ENCODE measurements at regions of chr17 and their contacts with region 1.

Region 1: DNA sequence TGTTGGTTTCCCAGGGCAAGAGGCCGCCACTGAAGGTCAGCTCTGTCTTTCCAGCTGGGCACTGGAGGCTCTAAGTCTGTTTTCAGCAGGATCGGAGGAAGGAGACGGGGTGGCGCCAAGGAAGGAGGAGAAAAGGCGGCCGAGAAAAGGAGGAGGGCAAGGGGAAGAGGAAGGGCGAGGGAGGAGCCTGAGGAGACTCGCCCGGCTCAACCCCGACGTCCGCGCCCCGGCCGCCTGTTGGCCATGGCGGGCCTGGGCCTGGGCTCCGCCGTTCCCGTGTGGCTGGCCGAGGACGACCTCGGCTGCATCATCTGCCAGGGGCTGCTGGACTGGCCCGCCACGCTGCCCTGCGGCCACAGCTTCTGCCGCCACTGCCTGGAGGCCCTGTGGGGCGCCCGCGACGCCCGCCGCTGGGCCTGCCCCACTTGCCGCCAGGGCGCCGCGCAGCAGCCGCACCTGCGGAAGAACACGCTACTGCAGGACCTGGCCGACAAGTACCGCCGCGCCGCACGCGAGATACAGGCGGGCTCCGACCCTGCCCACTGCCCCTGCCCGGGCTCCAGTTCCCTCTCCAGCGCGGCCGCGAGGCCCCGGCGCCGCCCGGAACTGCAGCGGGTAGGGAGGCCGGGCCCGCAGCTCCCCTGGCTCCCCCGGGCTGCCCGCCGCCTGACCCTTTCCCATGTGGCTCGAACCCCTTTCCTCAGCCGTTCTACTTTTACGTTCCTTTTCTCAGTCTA is at the start of gene RNF135:
- DNase-seq: peak; percentile 86
- ATAC-seq: peak; percentile 67
- H3K4me3 ChIP-seq: peak within 1 kb of the TSS; percentile 87 to 94 (median 91)
- H3K4me3 Mint-ChIP-seq: peak within 1 kb of the TSS; percentile 99
- H3K27ac ChIP-seq: peak within 1 kb of the TSS; percentile 90
- H3K27ac Mint-ChIP-seq: peak within 1 kb of the TSS; percentile 94
- H3K4me1 ChIP-seq: peaks cover 31 to 46% of the 10 kb centered on the region in 2 donors
- H3K4me1 Mint-ChIP-seq: peaks cover 46% of the 10 kb centered on the region
- H3K27me3 ChIP-seq: no peaks in the 10 kb centered on the region
- H3K27me3 Mint-ChIP-seq: no peaks in the 10 kb centered on the region
- CTCF ChIP-seq: peak; percentile 43
- total RNA-seq, gene RNF135: 22.3 and 23.4 TPM in 2 replicates

Region 2: GRCh38 chr17:30808785-30809286 is 162.2 kb before region 1 on chr17:
- CTCF ChIA-PET with region 1: interaction called, 4 read pairs
- POLR2A ChIA-PET with region 1: no interaction called
- intact Hi-C with region 1: loop called (anchors 2 kb)
- DNase-seq: peak; percentile 86
- ATAC-seq: peak; percentile 96
- H3K4me3 ChIP-seq: peak overlapping the region in 4 of 5 experiments; percentile 11 to 41 (median 30)
- H3K4me3 Mint-ChIP-seq: peak overlapping the region; percentile 87
- H3K27ac ChIP-seq: peak overlapping the region; percentile 73 to 84
- H3K27ac Mint-ChIP-seq: peak overlapping the region; percentile 97
- H3K4me1 ChIP-seq: peaks cover 59 to 73% of the 10 kb centered on the region in 2 donors
- H3K4me1 Mint-ChIP-seq: peaks cover 65% of the 10 kb centered on the region
- H3K27me3 ChIP-seq: no peaks in the 10 kb centered on the region
- H3K27me3 Mint-ChIP-seq: no peaks in the 10 kb centered on the region
- CTCF ChIP-seq: no peak

Region 3: GRCh38 chr17:30906101-30906911 is 64.7 kb before region 1 on chr17 and contains the start of gene TEFM:
- CTCF ChIA-PET with region 1: interaction called, 4 read pairs
- POLR2A ChIA-PET with region 1: interaction called, 4 read pairs
- intact Hi-C with region 1: loop called (anchors 1 kb)
- DNase-seq: peak; percentile 92
- ATAC-seq: peak; percentile 96
- H3K4me3 ChIP-seq: peak within 1 kb of the TSS; percentile 67 to 92 (median 88)
- H3K4me3 Mint-ChIP-seq: peak within 1 kb of the TSS; percentile 95
- H3K27ac ChIP-seq: peak within 1 kb of the TSS; percentile 78 to 88
- H3K27ac Mint-ChIP-seq: peak within 1 kb of the TSS; percentile 92
- H3K4me1 ChIP-seq: peaks cover 21 to 33% of the 10 kb centered on the region in 2 donors
- H3K4me1 Mint-ChIP-seq: peaks cover 36% of the 10 kb centered on the region
- H3K27me3 ChIP-seq: no peaks in the 10 kb centered on the region
- H3K27me3 Mint-ChIP-seq: no peaks in the 10 kb centered on the region
- CTCF ChIP-seq: no peak
- total RNA-seq, gene TEFM: 27.4 and 27.8 TPM in 2 replicates

Region 4: GRCh38 chr17:30939051-30939689 is 31.8 kb before region 1 on chr17:
- CTCF ChIA-PET with region 1: interaction called, 5 read pairs
- POLR2A ChIA-PET with region 1: interaction called, 7 read pairs
- intact Hi-C with region 1: loop called (anchors 2 kb)
- DNase-seq: peak; percentile 58
- ATAC-seq: peak; percentile 60
- H3K4me3 ChIP-seq: peak overlapping the region in 2 of 5 experiments; percentile 30 to 50
- H3K4me3 Mint-ChIP-seq: peak overlapping the region; percentile 64
- H3K27ac ChIP-seq: peak overlapping the region; percentile 66 to 79
- H3K27ac Mint-ChIP-seq: peak overlapping the region; percentile 89
- H3K4me1 ChIP-seq: peaks cover 7 to 12% of the 10 kb centered on the region in 2 donors
- H3K4me1 Mint-ChIP-seq: peaks cover 12% of the 10 kb centered on the region
- H3K27me3 ChIP-seq: no peaks in the 10 kb centered on the region
- H3K27me3 Mint-ChIP-seq: no peaks in the 10 kb centered on the region
- CTCF ChIP-seq: no peak

Region 5: DNA sequence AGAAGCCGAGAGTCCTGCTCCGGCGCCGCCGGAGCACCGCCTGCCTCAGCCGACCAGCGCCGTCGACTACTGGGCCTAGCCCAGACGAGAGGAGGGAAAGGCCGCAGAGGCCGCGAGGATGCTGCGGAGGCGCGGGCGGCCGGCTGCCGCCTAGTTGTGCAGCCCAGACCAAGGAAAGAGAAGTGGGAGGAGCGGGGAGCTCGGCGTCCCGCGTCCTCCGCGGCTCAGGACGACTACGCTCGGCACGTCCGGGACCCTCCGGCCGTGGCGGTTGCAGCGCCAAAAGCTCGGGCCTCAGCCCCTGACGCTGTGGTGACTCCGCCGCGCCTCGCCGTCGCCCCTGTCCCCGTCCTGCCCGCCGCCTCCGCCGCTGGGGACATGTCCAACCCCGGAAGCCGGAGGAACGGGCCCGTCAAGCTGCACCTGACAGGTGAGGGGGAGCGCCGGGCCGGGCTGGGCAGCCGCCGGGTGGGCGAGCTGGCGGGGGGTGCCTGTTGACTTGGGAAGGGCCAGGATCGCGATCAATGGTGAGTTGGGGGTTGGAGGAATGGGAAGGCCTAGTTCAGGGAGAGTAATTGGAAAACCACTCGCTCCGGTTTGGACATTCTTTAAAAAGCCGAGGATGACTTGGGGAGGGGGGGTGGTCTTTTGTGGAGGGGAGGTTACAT is 37.5 kb after region 1 on chr17:
- CTCF ChIA-PET with region 1: interaction called, 7 read pairs
- POLR2A ChIA-PET with region 1: interaction called, 7 read pairs
- intact Hi-C with region 1: loop called (anchors 5 kb)
- DNase-seq: peak; percentile 75
- ATAC-seq: peak; percentile 79
- H3K4me3 ChIP-seq: peak overlapping the region; percentile 47 to 86 (median 69)
- H3K4me3 Mint-ChIP-seq: peak overlapping the region; percentile 96
- H3K27ac ChIP-seq: peak overlapping the region; percentile 41 to 77
- H3K27ac Mint-ChIP-seq: peak overlapping the region; percentile 95
- H3K4me1 ChIP-seq: peaks cover 3 to 12% of the 10 kb centered on the region in 2 donors
- H3K4me1 Mint-ChIP-seq: peaks cover 24% of the 10 kb centered on the region
- H3K27me3 ChIP-seq: no peaks in the 10 kb centered on the region
- H3K27me3 Mint-ChIP-seq: no peaks in the 10 kb centered on the region
- CTCF ChIP-seq: no peak

Region 6: DNA sequence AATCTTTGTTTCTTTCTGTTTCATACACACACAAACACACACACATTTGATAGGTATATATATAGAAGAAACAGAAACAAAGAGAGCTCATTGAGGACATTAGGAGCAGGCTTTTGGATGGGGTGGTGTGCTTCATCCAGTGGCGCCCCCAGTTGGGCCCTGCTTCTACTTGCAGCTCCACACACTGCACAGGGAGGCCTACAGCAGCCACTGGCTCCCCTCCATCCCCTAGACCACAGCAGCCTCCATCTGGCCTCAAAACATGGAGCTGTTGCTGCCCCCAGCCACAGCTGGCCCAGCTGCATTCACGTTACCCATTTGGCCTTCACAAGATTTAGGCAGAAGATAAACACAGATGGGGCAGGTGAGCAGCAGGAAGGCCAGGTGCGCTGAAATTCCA is 90.7 kb after region 1 on chr17:
- CTCF ChIA-PET with region 1: no interaction called
- POLR2A ChIA-PET with region 1: no interaction called
- intact Hi-C with region 1: no loop called
- DNase-seq: no peak
- ATAC-seq: no peak
- H3K4me3 ChIP-seq: no peak overlapping the region
- H3K4me3 Mint-ChIP-seq: no peak overlapping the region
- H3K27ac ChIP-seq: no peak overlapping the region
- H3K27ac Mint-ChIP-seq: no peak overlapping the region
- H3K4me1 ChIP-seq: peaks cover 0 to 5% of the 10 kb centered on the region in 2 donors
- H3K4me1 Mint-ChIP-seq: peaks cover 7% of the 10 kb centered on the region
- H3K27me3 ChIP-seq: no peaks in the 10 kb centered on the region
- H3K27me3 Mint-ChIP-seq: no peaks in the 10 kb centered on the region
- CTCF ChIP-seq: no peak